Common myeloid progenitor, CD34-positive (primary cell): ENCODE measurements at regions of chr2 and their contacts with region 1.

Region 1: GRCh38 chr2:207529330-207530159 is at the start of gene CREB1:
- DNase-seq: peak; percentile 98 to 100 (median 100)
- H3K4me3 ChIP-seq: peak within 1 kb of the TSS; percentile 62 to 99 (median 98)
- H3K27ac ChIP-seq: peak within 1 kb of the TSS; percentile 88 to 97
- H3K4me1 ChIP-seq: peaks cover 18 to 52% (median 35%) of the 10 kb centered on the region in 4 experiments
- H3K27me3 ChIP-seq: no peaks in the 10 kb centered on the region

Region 2: DNA sequence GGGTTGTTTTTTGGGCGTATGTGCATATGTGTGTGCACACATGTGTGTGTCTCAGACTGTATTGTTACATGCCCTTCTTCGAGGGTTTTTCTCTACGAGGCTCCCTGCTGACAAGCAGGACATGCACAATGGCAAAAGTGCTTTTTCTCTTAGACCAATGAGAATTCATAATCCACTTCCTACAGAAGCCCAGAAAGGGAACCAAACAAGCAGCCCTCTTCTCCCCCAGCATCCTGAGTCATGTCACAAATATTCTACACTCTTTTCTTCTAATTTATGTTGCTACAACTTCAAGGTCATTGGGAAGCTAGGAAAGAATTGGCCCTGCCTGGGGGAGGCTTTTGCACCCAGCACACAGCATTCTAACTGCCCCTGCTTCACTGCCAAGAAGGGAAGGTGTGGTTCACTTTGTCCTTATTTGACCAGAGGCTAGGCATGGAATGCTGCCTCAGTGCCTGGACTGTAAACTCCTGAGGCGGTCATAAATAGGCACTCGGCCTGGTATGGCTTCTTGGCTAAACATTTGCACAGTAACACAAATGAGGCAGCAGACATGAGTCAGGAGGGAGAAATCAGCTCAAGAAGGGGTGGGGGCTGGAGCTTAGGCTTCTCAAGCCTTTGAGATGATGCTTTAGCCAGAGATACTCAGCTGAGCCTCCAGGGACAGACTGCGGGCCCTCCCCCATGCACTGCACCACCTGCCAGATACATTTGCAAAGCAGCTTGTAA is 271.1 kb before region 1 on chr2:
- CTCF ChIA-PET with region 1: no interaction called
- POLR2A ChIA-PET with region 1: no interaction called
- DNase-seq: peak in 2 of 3 donors; percentile 44
- H3K4me3 ChIP-seq: no peak overlapping the region
- H3K27ac ChIP-seq: no peak overlapping the region
- H3K4me1 ChIP-seq: peaks cover 13 to 56% (median 28%) of the 10 kb centered on the region in 4 experiments
- H3K27me3 ChIP-seq: no peaks in the 10 kb centered on the region

Region 3: GRCh38 chr2:207503234-207503633 is 26.3 kb before region 1 on chr2:
- CTCF ChIA-PET with region 1: interaction called, 12 read pairs
- POLR2A ChIA-PET with region 1: interaction called, 4 read pairs
- DNase-seq: peak in 1 of 3 donors; percentile 21
- H3K4me3 ChIP-seq: no peak overlapping the region
- H3K27ac ChIP-seq: no peak overlapping the region
- H3K4me1 ChIP-seq: peaks cover 6 to 70% (median 25%) of the 10 kb centered on the region in 4 experiments
- H3K27me3 ChIP-seq: no peaks in the 10 kb centered on the region

Region 4: DNA sequence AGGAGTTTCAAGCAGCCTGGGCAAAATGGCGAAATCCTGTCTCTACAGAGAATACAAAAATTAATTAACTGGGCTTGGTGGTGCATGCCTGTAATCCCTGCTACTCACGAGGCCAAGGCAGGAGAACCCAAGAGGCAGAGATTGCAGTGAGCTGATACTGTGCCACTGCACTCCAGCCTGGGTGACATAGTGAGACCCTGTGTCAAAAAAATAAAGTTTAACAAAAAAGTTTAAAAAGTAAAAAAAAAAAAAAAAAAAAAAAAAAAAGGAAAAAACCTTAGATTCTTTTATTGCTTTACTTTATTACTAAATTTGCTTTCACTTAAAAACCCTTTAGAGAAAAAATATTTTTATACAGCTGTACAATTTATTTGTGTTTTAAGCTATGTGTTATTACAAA is 10.9 kb after region 1 on chr2:
- CTCF ChIA-PET with region 1: interaction called, 38 read pairs
- POLR2A ChIA-PET with region 1: interaction called, 5 read pairs
- DNase-seq: peak in 1 of 3 donors; percentile 26
- H3K4me3 ChIP-seq: no peak overlapping the region
- H3K27ac ChIP-seq: no peak overlapping the region
- H3K4me1 ChIP-seq: peaks cover 0 to 6% (median 1%) of the 10 kb centered on the region in 4 experiments
- H3K27me3 ChIP-seq: no peaks in the 10 kb centered on the region

Region 5: GRCh38 chr2:207632575-207633493 is 103.3 kb after region 1 on chr2:
- CTCF ChIA-PET with region 1: no interaction called
- POLR2A ChIA-PET with region 1: no interaction called
- DNase-seq: peak; percentile 65 to 90 (median 89)
- H3K4me3 ChIP-seq: no peak overlapping the region
- H3K27ac ChIP-seq: peak overlapping the region in 1 of 2 experiments; percentile 52
- H3K4me1 ChIP-seq: peaks cover 4 to 54% (median 25%) of the 10 kb centered on the region in 4 experiments
- H3K27me3 ChIP-seq: no peaks in the 10 kb centered on the region

Region 6: GRCh38 chr2:207933396-207934065 is 404.0 kb after region 1 on chr2:
- CTCF ChIA-PET with region 1: no interaction called
- POLR2A ChIA-PET with region 1: no interaction called
- DNase-seq: no peak
- H3K4me3 ChIP-seq: no peak overlapping the region
- H3K27ac ChIP-seq: no peak overlapping the region
- H3K4me1 ChIP-seq: no peaks in the 10 kb centered on the region
- H3K27me3 ChIP-seq: no peaks in the 10 kb centered on the region